ENCODE measurements at regions of chr21 and their contacts with region 1.

Region 1: GRCh38 chr21:25039461-25040380 is 567.6 kb downstream of the MRPL39 start:
- DNase-seq: no peak
- H3K4me3 ChIP-seq: no peak overlapping the region
- H3K27ac ChIP-seq: no peak overlapping the region
- H3K4me1 ChIP-seq: no peaks in the 10 kb centered on the region
- H3K27me3 ChIP-seq: no peaks in the 10 kb centered on the region
- CTCF ChIP-seq: peak; percentile 24 to 50 (median 30)
- EP300 ChIP-seq: no peak
- POLR2A ChIP-seq: no peak

Region 2: GRCh38 chr21:24649691-24650090 is 390.0 kb before region 1 on chr21:
- intact Hi-C with region 1: no loop called
- DNase-seq: no peak
- H3K4me3 ChIP-seq: no peak overlapping the region
- H3K27ac ChIP-seq: no peak overlapping the region
- H3K4me1 ChIP-seq: no peaks in the 10 kb centered on the region
- H3K27me3 ChIP-seq: no peaks in the 10 kb centered on the region
- CTCF ChIP-seq: no peak
- EP300 ChIP-seq: no peak
- POLR2A ChIP-seq: no peak

Region 3: DNA sequence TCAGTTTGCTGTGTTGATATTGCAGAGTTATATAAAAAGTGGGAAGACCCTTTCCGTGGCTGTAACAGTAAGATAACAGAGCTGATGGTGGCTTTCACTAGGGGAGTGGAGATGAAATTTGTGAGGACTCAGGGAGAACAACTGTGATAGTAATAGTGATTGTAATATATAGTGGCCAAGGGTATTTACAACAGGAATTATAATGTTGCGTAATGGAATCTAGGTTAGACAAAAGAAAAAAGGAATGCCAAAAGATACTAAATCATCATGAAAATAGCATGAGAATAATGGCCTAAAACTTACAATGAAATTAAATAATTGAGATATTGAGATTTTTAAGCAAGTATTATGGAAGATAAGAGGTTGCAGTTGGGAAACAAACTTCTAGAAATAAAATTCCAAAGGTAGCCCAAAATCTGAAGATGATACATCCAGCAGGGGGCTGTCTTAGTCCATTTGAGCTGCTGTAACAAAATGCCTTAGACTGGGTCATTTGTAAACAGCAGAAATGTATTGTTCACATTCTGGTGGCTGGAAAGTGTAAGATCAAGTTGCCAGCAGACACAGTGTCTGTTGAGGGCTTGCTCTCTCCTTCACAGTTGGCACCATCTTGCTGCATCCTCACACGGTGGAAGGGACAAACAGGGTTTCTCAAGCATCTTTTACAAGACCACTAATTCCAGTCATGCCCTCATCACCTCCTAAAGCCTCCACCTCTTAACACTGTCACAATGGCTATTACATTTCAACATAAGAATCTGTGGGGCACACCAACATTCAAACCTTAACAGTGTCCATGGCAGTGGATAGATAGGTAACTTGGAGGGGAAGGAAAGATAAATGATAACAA is 143.6 kb before region 1 on chr21:
- intact Hi-C with region 1: loop called in 1 of 4 experiments (anchors 10 kb)
- DNase-seq: peak in 3 of 5 donors; percentile 14 to 37 (median 29)
- H3K4me3 ChIP-seq: no peak overlapping the region
- H3K27ac ChIP-seq: no peak overlapping the region
- H3K4me1 ChIP-seq: peaks cover 2% of the 10 kb centered on the region
- H3K27me3 ChIP-seq: no peaks in the 10 kb centered on the region
- CTCF ChIP-seq: peak in 2 of 3 donors; percentile 39 to 48
- EP300 ChIP-seq: no peak
- POLR2A ChIP-seq: no peak

Region 4: GRCh38 chr21:24969068-24969467 is 70.7 kb before region 1 on chr21:
- intact Hi-C with region 1: no loop called
- DNase-seq: no peak
- H3K4me3 ChIP-seq: no peak overlapping the region
- H3K27ac ChIP-seq: no peak overlapping the region
- H3K4me1 ChIP-seq: no peaks in the 10 kb centered on the region
- H3K27me3 ChIP-seq: no peaks in the 10 kb centered on the region
- CTCF ChIP-seq: no peak
- EP300 ChIP-seq: no peak
- POLR2A ChIP-seq: no peak

Region 5: GRCh38 chr21:25273959-25274358 is 234.2 kb after region 1 on chr21:
- intact Hi-C with region 1: loop called in 1 of 4 experiments (anchors 5 kb)
- DNase-seq: no peak
- H3K4me3 ChIP-seq: no peak overlapping the region
- H3K27ac ChIP-seq: no peak overlapping the region
- H3K4me1 ChIP-seq: no peaks in the 10 kb centered on the region
- H3K27me3 ChIP-seq: no peaks in the 10 kb centered on the region
- CTCF ChIP-seq: no peak
- EP300 ChIP-seq: no peak
- POLR2A ChIP-seq: no peak

Region 6: GRCh38 chr21:25670726-25671125 is 631.0 kb after region 1 on chr21:
- intact Hi-C with region 1: no loop called
- DNase-seq: no peak
- H3K4me3 ChIP-seq: no peak overlapping the region
- H3K27ac ChIP-seq: no peak overlapping the region
- H3K4me1 ChIP-seq: peaks cover 2% of the 10 kb centered on the region
- H3K27me3 ChIP-seq: no peaks in the 10 kb centered on the region
- CTCF ChIP-seq: no peak
- EP300 ChIP-seq: no peak
- POLR2A ChIP-seq: no peak